HEK293 (cell line): ENCODE measurements at regions of chr22 and their contacts with region 1.

Region 1: GRCh38 chr22:22884010-22884887 is 3.4 kb upstream of the IGLL5 start:
- H3K4me3 ChIP-seq: no peak overlapping the region
- H3K27ac ChIP-seq: no peak overlapping the region
- H3K4me1 ChIP-seq: no peaks in the 10 kb centered on the region
- CTCF ChIP-seq: peak; percentile 48

Region 2: DNA sequence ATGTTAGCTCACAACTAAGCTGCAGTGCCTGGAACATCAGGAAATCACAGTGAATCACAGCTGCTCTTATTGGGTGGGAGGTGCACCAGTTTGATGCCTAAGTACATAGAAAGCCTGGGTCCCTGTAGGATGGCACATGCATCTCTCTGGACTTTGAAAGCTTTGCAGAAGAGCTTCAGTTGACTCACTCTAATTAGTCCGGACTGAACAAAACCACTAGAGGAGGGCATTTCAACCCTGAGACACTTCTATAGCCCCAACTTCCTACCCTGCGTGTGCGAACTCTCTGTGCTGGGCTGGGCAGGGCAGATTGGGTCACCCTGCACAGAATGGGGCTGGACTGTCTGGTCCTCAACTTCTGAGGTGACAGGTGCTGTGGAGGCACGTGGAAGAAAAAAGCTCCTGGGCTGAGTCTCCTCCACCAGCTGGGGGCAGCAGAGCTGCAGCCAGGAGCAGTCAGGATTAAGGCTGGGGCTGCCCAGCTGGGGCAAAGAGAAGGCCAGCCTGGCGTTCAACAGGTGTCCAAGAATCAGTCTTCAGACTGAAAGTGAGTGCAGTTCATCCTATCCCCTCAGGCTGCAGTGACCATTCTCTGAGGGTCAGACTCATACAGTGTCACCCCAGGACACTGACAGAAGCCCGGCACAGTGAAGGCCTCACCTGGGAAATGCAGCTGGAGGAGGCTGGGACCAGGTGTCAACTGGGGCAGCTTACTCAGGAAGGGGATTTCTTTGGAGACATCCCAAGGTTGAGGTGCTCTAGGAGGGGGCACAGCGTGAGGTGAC is 217.8 kb before region 1 on chr22:
- CTCF ChIA-PET with region 1: interaction called, 13 read pairs
- POLR2A ChIA-PET with region 1: no interaction called
- H3K4me3 ChIP-seq: no peak overlapping the region
- H3K27ac ChIP-seq: no peak overlapping the region
- H3K4me1 ChIP-seq: no peaks in the 10 kb centered on the region
- CTCF ChIP-seq: peak; percentile 65

Region 3: DNA sequence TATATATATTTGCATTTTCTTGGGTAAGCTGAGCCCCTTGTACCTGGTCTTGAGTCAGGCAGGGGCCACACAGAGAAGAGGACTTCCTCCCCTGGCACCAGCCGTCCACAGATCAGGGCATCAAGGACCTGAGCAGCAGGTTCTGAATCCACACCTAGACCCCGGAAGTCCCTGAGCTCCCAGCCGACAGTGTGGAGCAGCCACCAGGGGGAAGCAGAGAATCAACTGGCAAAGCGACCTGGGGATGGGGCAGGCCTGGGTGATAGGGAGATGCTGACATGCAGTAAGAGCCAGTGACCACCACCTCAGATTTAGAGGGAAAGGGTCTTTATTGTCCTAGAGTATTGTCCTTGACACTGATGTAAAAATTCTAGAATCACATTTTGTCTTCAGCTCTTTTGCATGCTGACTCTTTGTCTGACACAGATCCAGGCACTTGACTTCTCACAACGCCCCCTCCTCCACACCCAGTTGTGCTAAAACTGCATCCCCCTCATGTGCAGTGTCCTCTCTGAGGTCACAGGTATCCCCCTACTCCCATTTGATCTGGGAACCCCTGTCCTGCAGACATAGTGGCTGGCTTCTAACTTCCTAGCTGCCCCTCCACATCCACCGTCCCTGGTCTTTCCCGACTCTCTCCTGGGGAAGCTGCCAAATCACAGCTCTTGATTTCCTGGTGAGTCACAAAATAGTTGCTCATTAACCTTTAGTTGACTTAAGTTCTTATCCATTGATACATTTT is 130.6 kb before region 1 on chr22:
- CTCF ChIA-PET with region 1: interaction called, 60 read pairs
- POLR2A ChIA-PET with region 1: interaction called, 4 read pairs
- H3K4me3 ChIP-seq: no peak overlapping the region
- H3K27ac ChIP-seq: no peak overlapping the region
- H3K4me1 ChIP-seq: no peaks in the 10 kb centered on the region
- CTCF ChIP-seq: peak; percentile 57; the same call in 1 of the 2 replicates

Region 4: DNA sequence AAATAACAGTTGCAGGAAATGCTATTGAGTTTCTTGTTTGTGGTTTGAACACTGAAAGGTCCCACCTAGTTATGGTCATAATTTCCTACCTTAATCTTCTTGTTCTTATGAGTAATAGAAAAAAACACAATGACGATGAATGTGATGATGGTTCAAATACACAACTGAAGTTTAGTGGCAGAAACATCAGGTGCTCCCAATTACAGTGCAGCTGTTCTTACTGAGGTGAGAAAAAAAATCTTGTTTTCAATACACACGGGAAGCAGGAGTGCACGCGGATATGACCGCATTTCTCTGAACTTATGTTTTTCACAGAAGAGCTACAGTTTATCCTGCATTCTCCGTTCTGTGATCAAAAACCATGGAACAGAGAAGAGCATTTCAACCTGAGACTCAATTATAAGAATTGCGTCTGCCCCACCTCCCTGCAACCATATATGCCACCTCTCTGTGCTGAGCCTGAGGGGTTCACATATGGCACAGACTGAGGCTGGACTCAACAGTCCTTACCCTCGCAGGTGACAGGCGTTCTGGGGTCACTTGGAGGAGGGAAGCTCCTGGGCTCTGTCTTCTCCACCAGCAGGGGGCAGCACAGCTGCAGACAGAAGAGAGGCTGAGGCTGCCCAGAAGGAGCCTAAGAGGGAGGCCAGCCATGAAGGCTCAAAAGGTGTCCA is 96.3 kb before region 1 on chr22:
- CTCF ChIA-PET with region 1: interaction called, 65 read pairs
- POLR2A ChIA-PET with region 1: no interaction called
- H3K4me3 ChIP-seq: no peak overlapping the region
- H3K27ac ChIP-seq: no peak overlapping the region
- H3K4me1 ChIP-seq: no peaks in the 10 kb centered on the region
- CTCF ChIP-seq: 0 out of 2 replicates have a peak, but pooled peaks have one; percentile 38

Region 5: GRCh38 chr22:22855617-22856308 is 28.5 kb before region 1 on chr22:
- CTCF ChIA-PET with region 1: interaction called, 107 read pairs
- POLR2A ChIA-PET with region 1: no interaction called
- H3K4me3 ChIP-seq: no peak overlapping the region
- H3K27ac ChIP-seq: no peak overlapping the region
- H3K4me1 ChIP-seq: no peaks in the 10 kb centered on the region
- CTCF ChIP-seq: peak; percentile 77

Region 6: GRCh38 chr22:22903355-22903777 is 19.1 kb after region 1 on chr22:
- CTCF ChIA-PET with region 1: interaction called, 11 read pairs
- POLR2A ChIA-PET with region 1: no interaction called
- H3K4me3 ChIP-seq: no peak overlapping the region
- H3K27ac ChIP-seq: no peak overlapping the region
- H3K4me1 ChIP-seq: no peaks in the 10 kb centered on the region
- CTCF ChIP-seq: no peak